SK-N-SH (cell line): ENCODE measurements at regions of chr10 and their contacts with region 1.

Region 1: GRCh38 chr10:99845837-99846382 is 63.5 kb downstream of the ABCC2 start:
- DNase-seq: peak; percentile 71
- H3K4me3 ChIP-seq: peak overlapping the region in 1 of 2 experiments; percentile 41; a peak in 1 of 4 replicates
- H3K27ac ChIP-seq: peak overlapping the region in 1 of 2 experiments; percentile 28; a peak in 1 of 4 replicates
- H3K4me1 ChIP-seq: no peaks in the 10 kb centered on the region; a peak in 1 of 4 replicates
- H3K27me3 ChIP-seq: no peaks in the 10 kb centered on the region
- CTCF ChIP-seq: peak; percentile 93
- EP300 ChIP-seq: no peak
- RAD21 ChIP-seq: peak; percentile 97

Region 2: GRCh38 chr10:99834410-99834809 is 11.5 kb before region 1 on chr10:
- CTCF ChIA-PET with region 1: interaction called, 29 read pairs
- POLR2A ChIA-PET with region 1: no interaction called
- DNase-seq: no peak
- H3K4me3 ChIP-seq: no peak overlapping the region
- H3K27ac ChIP-seq: peak overlapping the region in 1 of 2 experiments; percentile 67; a peak in 2 of 4 replicates
- H3K4me1 ChIP-seq: peaks cover 0 to 9% of the 10 kb centered on the region in 2 experiments; a peak in 1 of 4 replicates
- H3K27me3 ChIP-seq: no peaks in the 10 kb centered on the region
- CTCF ChIP-seq: no peak
- EP300 ChIP-seq: no peak
- RAD21 ChIP-seq: no peak

Region 3: DNA sequence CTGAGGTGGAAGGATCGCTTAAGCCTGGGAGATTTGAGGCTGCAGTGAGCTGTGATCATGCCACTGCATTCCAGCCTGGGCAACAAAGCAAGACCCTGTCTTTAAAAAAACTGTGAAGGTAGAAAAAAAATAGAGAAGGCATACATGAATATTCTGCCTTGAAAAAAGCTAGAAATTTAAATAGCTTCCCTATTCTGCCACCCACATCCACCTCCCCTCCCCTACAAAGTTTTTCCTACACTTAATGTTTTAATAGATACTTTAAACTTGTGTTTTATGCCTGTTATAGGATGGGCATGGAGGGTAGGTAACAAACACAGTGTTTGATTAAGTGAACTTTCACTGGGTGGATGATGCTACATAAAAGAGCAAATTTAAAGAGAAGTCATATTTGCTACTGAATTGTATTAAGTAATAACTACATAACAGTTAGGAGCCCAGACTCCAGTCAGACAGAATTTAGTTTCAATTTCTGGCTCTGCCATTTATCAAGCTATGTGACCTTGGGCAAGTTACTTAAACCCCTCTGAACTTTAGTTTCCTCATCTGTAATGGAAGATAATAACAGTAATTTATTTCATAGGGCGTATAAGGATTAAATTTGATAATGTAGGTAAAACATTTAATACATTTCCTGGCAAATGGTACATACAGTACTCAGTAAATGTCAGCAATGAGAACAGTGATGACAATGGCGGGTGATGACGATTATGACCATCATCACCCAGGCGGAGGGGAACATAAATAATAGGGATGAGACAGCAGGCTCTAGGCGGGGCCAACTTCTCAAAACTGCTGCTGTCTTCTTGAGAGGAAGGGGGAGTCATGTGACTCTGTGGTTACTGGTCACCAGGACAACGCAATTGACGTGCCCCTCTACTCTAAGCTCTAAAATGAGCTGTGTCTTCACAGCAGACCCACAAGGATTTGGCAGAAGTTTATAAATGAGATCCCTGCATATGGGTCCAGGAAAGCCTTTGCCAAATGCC is 148.1 kb after region 1 on chr10:
- CTCF ChIA-PET with region 1: interaction called, 11 read pairs
- POLR2A ChIA-PET with region 1: no interaction called
- DNase-seq: no peak
- H3K4me3 ChIP-seq: no peak overlapping the region
- H3K27ac ChIP-seq: peak overlapping the region; percentile 36 to 83
- H3K4me1 ChIP-seq: peaks cover 4 to 48% of the 10 kb centered on the region in 2 experiments
- H3K27me3 ChIP-seq: no peaks in the 10 kb centered on the region
- CTCF ChIP-seq: no peak
- EP300 ChIP-seq: no peak
- RAD21 ChIP-seq: no peak

Region 4: DNA sequence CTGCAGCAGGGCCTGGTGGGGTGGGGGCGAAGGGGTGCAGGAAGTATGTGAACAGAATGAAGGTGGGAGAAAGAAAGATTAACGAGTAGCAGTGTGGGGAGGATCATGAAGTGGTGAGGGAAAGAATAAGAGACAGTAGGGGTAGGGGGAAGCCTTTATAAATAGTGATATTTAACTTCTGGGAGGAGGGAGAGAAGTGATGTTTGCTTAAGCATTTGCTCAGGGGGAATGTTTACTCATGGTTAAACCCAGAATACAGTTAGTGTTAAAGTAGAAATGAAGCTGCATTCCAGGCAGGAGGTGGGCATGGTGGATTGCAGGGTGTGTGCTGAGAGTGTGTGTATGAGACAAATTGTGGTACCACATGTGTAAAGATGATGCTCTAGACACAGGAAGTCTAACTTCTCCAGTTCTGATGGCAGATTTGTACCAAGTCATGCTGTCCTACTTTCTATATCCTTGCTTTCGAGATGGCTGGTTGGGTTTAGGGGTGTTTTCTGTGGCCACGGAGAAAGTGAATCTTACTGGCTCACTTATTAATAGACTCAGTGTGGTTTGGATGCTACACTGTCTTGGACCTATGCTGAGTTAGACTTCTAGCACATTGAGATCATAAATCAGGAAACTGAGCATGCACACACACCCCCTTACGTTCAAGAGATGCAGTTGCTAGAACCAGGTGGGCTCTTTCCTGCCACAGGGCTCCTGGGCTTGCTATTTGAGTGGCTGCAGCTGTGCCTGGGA is 174.4 kb after region 1 on chr10:
- CTCF ChIA-PET with region 1: interaction called, 14 read pairs
- POLR2A ChIA-PET with region 1: no interaction called
- DNase-seq: no peak
- H3K4me3 ChIP-seq: no peak overlapping the region
- H3K27ac ChIP-seq: no peak overlapping the region
- H3K4me1 ChIP-seq: peaks cover 0 to 5% of the 10 kb centered on the region in 2 experiments; a peak in 1 of 4 replicates
- H3K27me3 ChIP-seq: no peaks in the 10 kb centered on the region
- CTCF ChIP-seq: no peak
- EP300 ChIP-seq: no peak
- RAD21 ChIP-seq: no peak

Region 5: DNA sequence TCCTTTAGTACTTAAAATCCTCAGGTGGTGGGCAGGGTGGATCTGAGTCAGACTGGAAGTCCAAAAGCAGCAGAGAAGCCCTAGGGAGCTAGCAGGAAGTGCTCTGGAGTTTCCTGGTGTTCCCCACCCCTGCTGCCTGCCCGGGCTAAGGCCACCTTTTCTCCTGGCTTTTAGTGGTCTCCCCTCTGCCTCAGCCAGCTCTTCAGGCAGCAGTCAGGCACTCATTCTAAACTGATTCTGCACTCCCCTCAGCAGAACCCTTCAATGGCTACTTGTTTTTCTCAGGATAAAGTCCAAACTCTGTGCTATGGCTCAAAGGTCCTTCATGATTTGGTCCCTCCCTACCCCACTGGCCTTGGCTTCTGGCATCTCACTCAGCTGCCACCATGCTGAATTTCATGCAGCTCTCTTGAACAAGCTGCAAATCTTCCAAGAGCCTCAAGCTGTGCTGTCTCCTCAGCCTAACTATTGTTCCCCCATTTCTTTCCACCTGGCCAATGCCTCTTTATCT is 192.7 kb after region 1 on chr10:
- CTCF ChIA-PET with region 1: interaction called, 21 read pairs
- POLR2A ChIA-PET with region 1: no interaction called
- DNase-seq: no peak
- H3K4me3 ChIP-seq: no peak overlapping the region
- H3K27ac ChIP-seq: no peak overlapping the region
- H3K4me1 ChIP-seq: peaks cover 0 to under 1% of the 10 kb centered on the region in 2 experiments; a peak in 1 of 4 replicates
- H3K27me3 ChIP-seq: no peaks in the 10 kb centered on the region
- CTCF ChIP-seq: no peak
- EP300 ChIP-seq: no peak
- RAD21 ChIP-seq: no peak

Region 6: GRCh38 chr10:100053686-100054460 is 208.0 kb after region 1 on chr10:
- CTCF ChIA-PET with region 1: interaction called, 122 read pairs
- POLR2A ChIA-PET with region 1: no interaction called
- DNase-seq: no peak
- H3K4me3 ChIP-seq: no peak overlapping the region
- H3K27ac ChIP-seq: no peak overlapping the region
- H3K4me1 ChIP-seq: no peaks in the 10 kb centered on the region
- H3K27me3 ChIP-seq: no peaks in the 10 kb centered on the region
- CTCF ChIP-seq: no peak
- EP300 ChIP-seq: no peak
- RAD21 ChIP-seq: no peak

Region 7: GRCh38 chr10:100185364-100186252 is 339.7 kb after region 1 on chr10 and contains the start of gene ERLIN1:
- CTCF ChIA-PET with region 1: interaction called, 10 read pairs
- POLR2A ChIA-PET with region 1: no interaction called
- DNase-seq: peak; percentile 97
- H3K4me3 ChIP-seq: peak within 1 kb of the TSS; percentile 95 to 96
- H3K27ac ChIP-seq: peak within 1 kb of the TSS; percentile 55 to 93
- H3K4me1 ChIP-seq: peaks cover 14 to 23% of the 10 kb centered on the region in 2 experiments; a peak in 3 of 4 replicates
- H3K27me3 ChIP-seq: no peaks in the 10 kb centered on the region
- CTCF ChIP-seq: no peak
- EP300 ChIP-seq: no peak; a peak in 1 of 4 replicates
- RAD21 ChIP-seq: no peak; the same call in 1 of the 2 replicates
- polyA plus RNA-seq, gene ERLIN1: 43.8 and 46.7 TPM in 2 replicates